ENCODE measurements at regions of chr19 and their contacts with region 1.

Region 1: DNA sequence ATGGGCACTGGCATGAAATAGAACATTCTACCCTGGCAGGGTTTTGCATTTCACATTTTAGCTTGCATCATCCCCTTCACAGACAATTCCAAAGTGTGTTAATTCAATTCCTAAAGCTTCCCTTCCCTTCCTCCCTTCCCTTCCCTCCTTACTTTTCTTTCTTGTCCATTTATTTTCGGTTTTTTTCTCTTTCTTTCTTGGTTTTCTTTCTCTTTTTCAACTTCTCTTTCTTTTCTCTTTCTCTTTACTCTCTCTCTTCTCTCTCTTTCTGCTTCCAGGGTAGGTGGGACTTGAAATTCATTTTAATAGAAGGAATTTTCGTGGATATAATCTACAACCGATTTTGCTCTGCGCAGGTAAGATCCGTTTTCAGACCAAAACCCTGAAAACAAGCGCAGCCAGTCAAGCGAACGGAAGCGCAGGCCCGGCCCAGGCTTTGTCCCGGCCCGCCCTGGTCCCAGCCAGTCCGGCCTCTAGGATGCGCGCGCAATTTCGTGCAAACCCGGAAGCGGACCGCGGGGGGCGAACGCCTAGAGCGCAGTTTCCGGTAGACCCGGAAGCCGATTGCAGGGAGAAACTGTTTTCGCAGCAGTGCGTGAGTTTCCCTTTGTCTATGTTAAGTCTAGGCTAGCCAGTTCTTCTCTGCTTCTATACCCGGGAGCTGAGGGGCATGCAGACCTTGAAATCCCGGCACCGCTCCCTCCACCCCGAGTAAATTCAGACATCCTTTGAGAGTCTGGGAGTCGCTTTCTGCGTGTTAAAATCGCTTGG is at the start of gene ZNF528:
- DNase-seq: peak; percentile 97
- H3K4me3 Mint-ChIP-seq: peak within 1 kb of the TSS; percentile 92
- H3K27ac Mint-ChIP-seq: peak within 1 kb of the TSS; percentile 85
- H3K4me1 Mint-ChIP-seq: peaks cover 16% of the 10 kb centered on the region
- H3K27me3 Mint-ChIP-seq: no peaks in the 10 kb centered on the region
- total RNA-seq, gene ZNF528: 5.7 and 7.9 TPM in 2 replicates

Region 2: DNA sequence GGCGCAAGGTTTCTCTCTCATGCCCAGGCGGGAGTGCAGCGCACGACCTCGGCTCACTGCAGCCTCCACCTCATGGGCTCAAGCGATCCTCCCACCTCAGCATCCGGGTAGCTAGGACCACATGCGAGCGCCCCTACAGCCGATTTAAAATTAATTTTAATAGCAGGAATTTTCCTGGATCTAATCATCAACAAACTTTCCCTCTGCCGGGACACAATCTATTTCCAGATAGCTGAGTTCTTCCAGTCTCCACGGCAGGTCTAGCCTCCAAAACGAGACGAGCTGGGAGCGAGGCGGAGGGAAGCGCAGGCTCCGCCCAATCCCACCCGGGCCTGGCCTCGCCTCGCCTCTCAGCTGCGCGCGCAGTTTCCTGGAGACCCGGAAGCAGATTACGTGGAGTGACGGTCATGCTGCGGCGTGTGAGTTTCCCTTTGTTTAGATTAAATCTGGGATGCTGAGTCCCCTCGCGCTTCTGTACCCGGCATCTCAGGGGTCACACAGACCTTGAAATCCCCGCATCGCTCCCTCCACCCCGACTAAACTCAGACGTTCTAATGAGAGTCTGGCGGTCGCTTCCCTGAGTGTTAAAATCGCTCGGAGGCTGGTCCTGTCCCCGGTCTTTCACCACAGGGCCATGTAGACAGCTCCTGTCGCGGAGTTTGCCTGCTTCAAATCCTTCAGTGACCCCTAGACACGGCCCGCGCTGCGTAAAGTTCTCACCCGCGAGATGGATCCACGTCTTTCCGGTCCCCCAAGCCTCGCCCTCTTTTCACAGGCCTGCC is 27.7 kb before region 1 on chr19 and contains the start of gene ZNF880:
- intact Hi-C with region 1: loop called (anchors 1 kb)
- DNase-seq: peak; percentile 96
- H3K4me3 Mint-ChIP-seq: peak within 1 kb of the TSS; percentile 90
- H3K27ac Mint-ChIP-seq: peak within 1 kb of the TSS; percentile 94
- H3K4me1 Mint-ChIP-seq: peaks cover 2% of the 10 kb centered on the region
- H3K27me3 Mint-ChIP-seq: no peaks in the 10 kb centered on the region
- total RNA-seq, gene ZNF880: 6.3 and 9.0 TPM in 2 replicates

Region 3: DNA sequence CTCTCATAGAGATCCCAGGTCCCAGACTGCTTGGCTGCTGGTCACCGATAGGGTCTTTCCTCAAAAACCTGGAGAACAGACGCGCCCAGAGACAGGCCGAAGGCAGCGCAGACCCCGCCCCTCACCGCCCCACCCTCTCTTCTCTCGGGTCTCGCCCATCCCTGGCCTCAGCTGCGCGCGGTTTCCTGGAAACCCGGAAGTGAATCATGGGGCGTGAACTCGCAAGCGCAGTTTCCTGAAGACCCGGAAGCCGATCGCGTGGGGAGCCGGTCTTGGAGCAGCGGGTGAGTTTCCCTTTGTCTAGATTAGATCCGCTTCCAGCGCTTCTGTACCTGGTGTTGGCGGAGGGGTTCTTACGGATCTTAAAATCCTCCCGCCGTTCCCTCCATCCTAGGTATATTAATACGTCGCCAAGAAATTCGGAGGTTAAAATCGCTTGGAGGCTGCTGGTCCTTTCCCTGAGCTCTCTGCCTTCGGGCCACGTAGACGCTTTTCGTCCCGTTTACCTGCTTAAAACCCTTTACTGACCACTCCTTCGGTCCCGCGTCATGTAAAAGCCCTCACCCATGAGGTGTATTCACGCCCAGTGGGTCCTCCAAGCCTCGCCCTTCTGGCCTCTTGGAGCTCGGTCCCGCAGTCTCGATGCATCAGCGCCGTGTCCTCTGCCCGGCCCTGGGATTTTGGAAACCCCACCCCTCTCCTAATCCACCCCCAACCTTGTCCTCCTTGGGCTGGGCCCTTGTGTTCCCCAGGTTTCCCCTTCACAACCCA is 56.0 kb after region 1 on chr19 and contains the start of gene ZNF578:
- intact Hi-C with region 1: no loop called
- DNase-seq: peak; percentile 82
- H3K4me3 Mint-ChIP-seq: peak within 1 kb of the TSS; percentile 75
- H3K27ac Mint-ChIP-seq: no peak within 1 kb of the TSS
- H3K4me1 Mint-ChIP-seq: peaks cover 1% of the 10 kb centered on the region
- H3K27me3 Mint-ChIP-seq: no peaks in the 10 kb centered on the region
- total RNA-seq, gene ZNF578: 0.12 TPM in 1 of 2 replicates, not detected in the other

Region 4: DNA sequence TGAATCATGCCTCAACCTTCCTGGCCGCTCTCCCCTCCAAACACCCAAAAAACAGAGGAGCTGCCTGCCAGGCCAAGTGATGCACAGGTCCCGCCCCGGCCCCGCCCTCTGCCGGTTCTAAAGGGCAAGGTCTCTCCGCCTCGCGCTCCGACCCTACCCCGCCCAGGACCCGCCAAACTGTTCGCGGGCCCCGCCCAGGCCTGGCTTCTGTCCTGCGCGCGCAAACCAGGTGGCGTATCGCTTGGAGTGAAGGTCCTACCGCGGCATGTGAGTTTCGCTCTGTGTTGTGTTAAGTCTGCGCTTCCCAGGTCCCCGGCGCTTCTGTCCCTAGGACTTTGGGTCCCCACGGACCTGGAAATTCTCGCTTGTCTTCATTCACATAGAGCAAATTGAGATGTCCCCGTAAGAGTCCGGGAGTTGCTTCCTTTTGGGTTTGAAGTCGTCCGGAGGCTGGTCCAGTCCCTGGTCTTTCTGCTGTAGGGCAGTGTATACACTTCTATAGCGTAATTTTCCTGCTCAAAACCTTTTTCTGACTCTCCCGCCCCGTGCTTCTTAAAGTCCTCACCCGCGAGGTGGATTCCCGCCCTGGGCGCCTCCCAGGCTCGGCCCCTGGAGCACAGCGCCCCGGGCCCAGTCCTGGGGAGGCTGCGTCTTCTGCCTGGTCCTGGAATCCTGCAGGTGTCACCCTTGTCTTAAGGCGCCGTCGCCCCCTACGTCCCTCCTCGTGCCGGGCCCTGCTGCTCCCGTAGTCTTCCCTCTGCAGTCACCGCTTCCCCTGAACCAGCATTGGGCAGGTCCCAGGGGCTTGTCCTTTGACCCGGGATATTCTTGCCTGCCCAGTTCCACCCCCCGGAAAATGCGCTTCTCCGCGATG is 95.3 kb after region 1 on chr19:
- intact Hi-C with region 1: no loop called
- DNase-seq: no peak
- H3K4me3 Mint-ChIP-seq: no peak overlapping the region
- H3K27ac Mint-ChIP-seq: no peak overlapping the region
- H3K4me1 Mint-ChIP-seq: no peaks in the 10 kb centered on the region
- H3K27me3 Mint-ChIP-seq: no peaks in the 10 kb centered on the region

Region 5: GRCh38 chr19:52809801-52810200 is 412.3 kb after region 1 on chr19:
- intact Hi-C with region 1: no loop called
- DNase-seq: no peak
- H3K4me3 Mint-ChIP-seq: no peak overlapping the region
- H3K27ac Mint-ChIP-seq: no peak overlapping the region
- H3K4me1 Mint-ChIP-seq: no peaks in the 10 kb centered on the region
- H3K27me3 Mint-ChIP-seq: no peaks in the 10 kb centered on the region

Measured in activated CD4-positive, alpha-beta T cell treated with anti-CD3 and anti-CD28 coated beads, Interleukin-2, amount 10 ng/mL, durations not matched to agents 24 days and 14 days (primary cell).